ENCODE measurements at regions of chr7 and their contacts with region 1.

Region 1: DNA sequence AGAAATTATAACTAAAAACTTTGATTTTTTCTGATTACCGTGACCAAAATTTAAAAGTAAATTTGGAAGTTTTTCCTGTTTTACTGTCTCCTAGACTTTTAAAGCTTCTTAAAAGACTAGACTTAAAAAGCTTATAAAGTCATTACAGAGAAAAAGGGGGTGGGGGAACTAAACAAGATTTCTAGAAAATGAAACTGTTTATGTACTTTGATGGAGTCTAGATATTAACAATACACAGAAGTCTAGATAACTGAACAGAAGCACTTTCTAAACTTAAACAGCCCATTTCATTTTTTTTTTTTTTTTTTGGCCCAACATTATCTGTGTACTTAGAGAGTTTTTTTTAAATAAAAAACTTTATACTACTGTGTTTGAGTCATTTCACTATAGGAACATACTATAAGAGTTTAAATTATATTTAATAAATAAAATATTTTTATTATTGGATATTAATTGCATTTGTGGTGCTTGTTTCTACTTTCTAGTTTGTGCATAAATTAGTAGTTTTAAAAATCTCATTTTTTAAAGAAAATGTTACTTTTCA is 98.5 kb downstream of the PHTF2 start:
- DNase-seq: no peak
- H3K4me3 ChIP-seq: no peak overlapping the region
- H3K27ac ChIP-seq: no peak overlapping the region
- H3K4me1 ChIP-seq: no peaks in the 10 kb centered on the region
- H3K27me3 ChIP-seq: no peaks in the 10 kb centered on the region
- CTCF ChIP-seq: no peak
- POLR2A ChIP-seq: no peak

Region 2: GRCh38 chr7:77561352-77561751 is 335.7 kb before region 1 on chr7:
- intact Hi-C with region 1: no loop called
- DNase-seq: no peak
- H3K4me3 ChIP-seq: no peak overlapping the region
- H3K27ac ChIP-seq: no peak overlapping the region
- H3K4me1 ChIP-seq: peaks cover 42% of the 10 kb centered on the region
- H3K27me3 ChIP-seq: no peaks in the 10 kb centered on the region
- CTCF ChIP-seq: no peak
- POLR2A ChIP-seq: no peak

Region 3: DNA sequence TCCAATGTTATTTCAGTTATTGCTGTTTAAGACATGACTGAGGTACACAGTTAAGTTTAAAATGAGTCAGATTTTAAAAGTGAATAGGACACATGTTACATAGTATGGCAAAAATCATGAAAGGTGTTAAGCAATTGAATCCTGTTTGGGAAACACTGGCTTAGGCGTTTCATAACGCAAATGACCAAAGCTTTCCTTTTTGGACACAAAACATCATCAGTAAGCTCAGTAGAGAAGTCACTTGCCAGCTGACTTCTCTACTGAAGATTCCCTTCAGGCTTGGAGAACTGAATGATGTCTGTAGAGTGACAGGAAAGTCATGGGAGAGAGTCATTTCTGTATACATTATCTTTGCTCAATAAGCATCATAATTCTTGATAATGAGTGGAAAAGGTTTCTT is 265.3 kb before region 1 on chr7:
- intact Hi-C with region 1: no loop called
- DNase-seq: no peak
- H3K4me3 ChIP-seq: no peak overlapping the region
- H3K27ac ChIP-seq: no peak overlapping the region
- H3K4me1 ChIP-seq: no peaks in the 10 kb centered on the region
- H3K27me3 ChIP-seq: no peaks in the 10 kb centered on the region
- CTCF ChIP-seq: no peak
- POLR2A ChIP-seq: no peak

Region 4: DNA sequence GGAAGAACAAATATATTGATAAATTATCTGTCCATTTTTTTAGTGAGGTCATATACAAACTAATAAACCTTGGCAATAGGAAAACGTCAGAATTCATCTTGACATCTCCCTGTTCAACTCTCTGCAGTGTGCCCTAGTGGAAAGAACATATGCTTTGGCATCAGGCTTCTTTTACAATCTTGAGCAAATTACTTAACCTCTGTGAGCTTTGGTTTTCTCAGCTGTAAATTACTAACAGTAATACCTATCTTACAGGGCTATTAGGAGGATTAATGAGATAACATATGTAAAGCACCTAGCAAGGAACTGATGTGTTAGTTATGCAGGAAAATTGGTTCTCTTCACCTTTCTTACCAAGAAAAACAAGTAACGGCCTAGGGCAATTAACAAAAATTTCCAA is 63.3 kb after region 1 on chr7:
- intact Hi-C with region 1: loop called (anchors 2 kb)
- DNase-seq: no peak
- H3K4me3 ChIP-seq: no peak overlapping the region
- H3K27ac ChIP-seq: no peak overlapping the region
- H3K4me1 ChIP-seq: no peaks in the 10 kb centered on the region
- H3K27me3 ChIP-seq: no peaks in the 10 kb centered on the region
- CTCF ChIP-seq: no peak
- POLR2A ChIP-seq: no peak

Region 5: DNA sequence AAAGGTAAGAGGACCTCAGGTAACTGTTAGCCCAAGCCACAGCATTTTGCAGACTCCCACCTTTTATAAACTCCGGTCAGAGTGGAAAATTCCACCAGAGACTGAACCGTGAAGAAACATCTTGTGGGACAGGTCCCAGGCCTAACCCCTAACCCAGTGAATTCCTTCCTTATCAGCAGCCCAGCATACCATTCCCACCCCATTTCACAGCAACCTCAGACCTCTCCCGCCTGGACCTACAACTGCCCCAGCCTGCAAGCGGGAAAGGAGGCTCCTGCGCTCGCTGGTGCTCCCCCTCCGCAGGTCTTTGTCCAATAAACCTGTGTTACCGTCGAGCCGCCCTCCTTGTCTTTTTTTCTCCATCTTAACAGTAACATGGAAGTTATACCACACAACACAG is 819.8 kb after region 1 on chr7:
- intact Hi-C with region 1: no loop called
- DNase-seq: no peak
- H3K4me3 ChIP-seq: no peak overlapping the region
- H3K27ac ChIP-seq: no peak overlapping the region
- H3K4me1 ChIP-seq: no peaks in the 10 kb centered on the region
- H3K27me3 ChIP-seq: no peaks in the 10 kb centered on the region
- CTCF ChIP-seq: no peak
- POLR2A ChIP-seq: no peak